Mucosa of descending colon (tissue), 3 donors: ENCODE measurements at regions of chr6 and their contacts with region 1.

Region 1: GRCh38 chr6:55980627-55981211 is 105.3 kb upstream of the BMP5 start:
- DNase-seq: peak in 1 of 3 donors; percentile 61
- ATAC-seq: no peak
- H3K4me3 ChIP-seq: no peak overlapping the region
- H3K4me1 ChIP-seq: no peaks in the 10 kb centered on the region
- CTCF ChIP-seq: peak; percentile 12

Region 2: GRCh38 chr6:56292505-56293181 is 311.9 kb after region 1 on chr6:
- intact Hi-C with region 1: loop called (anchors 5 kb)
- DNase-seq: peak in 1 of 3 donors; percentile 62
- ATAC-seq: peak; percentile 62
- H3K4me3 ChIP-seq: no peak overlapping the region
- H3K4me1 ChIP-seq: no peaks in the 10 kb centered on the region
- CTCF ChIP-seq: no peak

Region 3: DNA sequence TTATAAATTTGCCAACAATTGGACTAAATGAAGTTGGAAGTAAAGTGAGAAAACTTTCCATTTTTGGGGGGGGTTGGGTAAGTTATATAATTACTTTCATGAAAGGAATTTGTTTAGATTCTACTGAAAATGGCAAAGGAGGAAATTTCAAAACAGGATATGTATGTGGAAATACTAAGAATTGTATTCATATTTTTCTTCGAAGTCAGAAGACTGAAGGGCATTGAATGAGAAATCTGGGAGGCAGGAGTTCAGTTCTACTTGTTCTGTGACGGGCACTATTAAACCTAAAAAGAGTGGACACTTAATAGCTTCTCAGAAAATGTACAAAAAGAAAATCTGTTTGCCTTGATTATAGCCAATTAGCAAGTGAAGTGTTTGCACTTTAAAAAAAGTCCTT is 1451.4 kb after region 1 on chr6:
- intact Hi-C with region 1: no loop called
- DNase-seq: no peak
- ATAC-seq: no peak
- H3K4me3 ChIP-seq: no peak overlapping the region
- H3K4me1 ChIP-seq: no peaks in the 10 kb centered on the region
- CTCF ChIP-seq: no peak